Activated B cell treated with CpG ODN at 0.5 μM for 24 hours (primary cell): ENCODE measurements at regions of chr9 and their contacts with region 1.

Region 1: GRCh38 chr9:37371565-37372464 is 50.7 kb upstream of the GRHPR start:
- DNase-seq: peak; percentile 48
- ATAC-seq: peak; percentile 16
- H3K4me3 Mint-ChIP-seq: peak overlapping the region; percentile 57
- H3K27ac Mint-ChIP-seq: peak overlapping the region; percentile 100
- H3K4me1 Mint-ChIP-seq: peaks cover 91% of the 10 kb centered on the region
- H3K27me3 Mint-ChIP-seq: no peaks in the 10 kb centered on the region
- CTCF ChIP-seq: no peak

Region 2: DNA sequence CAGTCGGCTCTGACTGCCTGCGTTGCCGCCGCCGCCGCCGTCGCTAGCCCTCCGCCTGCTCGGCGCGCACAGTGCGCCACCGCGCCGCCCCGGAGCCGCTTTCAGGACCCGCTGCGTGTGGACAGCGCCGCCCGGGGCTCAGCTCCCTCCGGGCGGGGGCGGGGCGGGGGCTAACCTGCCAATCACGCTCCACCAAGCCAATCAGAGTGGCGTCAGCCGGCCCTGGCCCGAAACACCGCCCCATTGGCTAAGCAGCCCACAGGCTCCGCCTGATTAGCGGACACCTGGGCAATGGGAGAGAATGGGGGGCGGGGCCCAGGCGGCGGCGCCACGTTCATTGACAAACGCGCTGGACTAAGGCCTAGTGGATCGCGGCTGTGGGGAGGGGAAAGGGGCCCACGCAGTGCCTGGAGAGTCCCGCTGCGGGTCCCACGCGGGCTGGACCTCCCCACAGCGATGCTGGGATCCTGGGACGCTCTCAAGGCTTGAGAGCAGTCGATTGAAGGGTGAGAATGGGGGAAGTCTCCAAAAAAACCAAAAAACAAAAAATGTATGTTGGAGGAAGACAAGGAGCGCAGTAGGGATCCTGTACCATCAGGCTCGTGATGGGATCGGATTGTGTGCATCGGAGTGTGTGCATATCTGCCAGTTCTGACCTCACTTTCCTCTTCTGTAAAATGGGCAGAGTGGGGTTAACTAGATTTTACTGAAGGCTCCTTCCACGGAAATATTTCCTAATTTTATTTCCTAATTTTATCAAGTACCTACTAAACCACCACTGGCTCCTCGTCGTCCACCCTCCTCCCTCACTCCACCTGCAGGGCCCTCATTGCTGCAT is 344.0 kb before region 1 on chr9:
- CTCF ChIA-PET with region 1: no interaction called
- POLR2A ChIA-PET with region 1: interaction called, 28 read pairs
- intact Hi-C with region 1: no loop called
- DNase-seq: peak; percentile 95
- ATAC-seq: peak; percentile 85
- H3K4me3 Mint-ChIP-seq: peak overlapping the region; percentile 90
- H3K27ac Mint-ChIP-seq: peak overlapping the region; percentile 96
- H3K4me1 Mint-ChIP-seq: peaks cover 77% of the 10 kb centered on the region
- H3K27me3 Mint-ChIP-seq: no peaks in the 10 kb centered on the region
- CTCF ChIP-seq: no peak

Region 3: DNA sequence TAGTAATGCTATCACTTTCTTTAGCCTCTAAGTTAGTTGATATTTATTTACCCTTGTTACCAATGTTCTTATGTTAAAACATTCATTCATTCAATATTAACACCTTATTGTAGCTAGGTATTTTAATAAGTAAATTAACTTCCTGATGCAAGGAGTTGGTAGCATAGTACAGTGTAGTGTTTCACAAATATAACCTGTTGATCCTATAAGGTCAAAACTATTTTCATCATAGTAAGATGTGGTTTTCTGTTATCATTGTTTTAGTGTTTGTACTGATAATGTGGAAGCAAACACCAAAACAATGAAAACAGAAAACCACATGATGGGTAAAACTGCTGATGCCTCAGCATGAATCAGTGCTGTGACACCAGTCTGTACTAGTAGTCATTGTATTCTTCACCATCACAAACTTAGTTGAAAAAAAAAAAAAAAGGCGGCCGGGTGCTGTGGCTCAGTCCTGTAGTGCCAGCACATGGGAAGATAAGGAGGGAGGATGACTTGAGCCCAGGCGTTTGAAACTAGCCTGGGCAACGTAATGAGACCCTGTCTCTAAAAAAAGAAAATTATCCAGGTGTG is 214.9 kb before region 1 on chr9:
- CTCF ChIA-PET with region 1: no interaction called
- POLR2A ChIA-PET with region 1: no interaction called
- intact Hi-C with region 1: no loop called
- DNase-seq: no peak
- ATAC-seq: no peak
- H3K4me3 Mint-ChIP-seq: no peak overlapping the region
- H3K27ac Mint-ChIP-seq: peak overlapping the region; percentile 41
- H3K4me1 Mint-ChIP-seq: peaks cover 44% of the 10 kb centered on the region
- H3K27me3 Mint-ChIP-seq: no peaks in the 10 kb centered on the region
- CTCF ChIP-seq: no peak

Region 4: DNA sequence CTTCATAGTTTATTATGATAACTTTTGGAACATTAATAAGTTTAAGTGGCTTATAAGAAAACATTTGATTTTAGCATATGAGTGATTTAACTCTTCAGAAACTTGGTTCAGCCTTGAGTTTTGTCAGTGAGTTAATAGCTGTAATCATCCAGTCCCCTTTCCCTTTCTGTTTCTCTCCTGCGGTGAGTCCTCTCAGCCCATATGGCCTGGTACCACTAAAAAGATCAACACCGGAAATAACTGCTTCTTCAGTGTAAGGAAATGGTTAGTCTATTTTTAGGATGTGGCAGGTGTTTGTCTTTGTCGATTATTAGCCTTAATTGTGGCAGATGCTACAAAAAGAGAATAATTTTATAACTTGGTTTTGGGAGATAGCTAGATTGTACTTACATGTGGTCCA is 69.5 kb before region 1 on chr9:
- CTCF ChIA-PET with region 1: no interaction called
- POLR2A ChIA-PET with region 1: interaction called, 11 read pairs
- intact Hi-C with region 1: no loop called
- DNase-seq: no peak
- ATAC-seq: peak; percentile 84
- H3K4me3 Mint-ChIP-seq: peak overlapping the region; percentile 73
- H3K27ac Mint-ChIP-seq: peak overlapping the region; percentile 96
- H3K4me1 Mint-ChIP-seq: peaks cover 83% of the 10 kb centered on the region
- H3K27me3 Mint-ChIP-seq: no peaks in the 10 kb centered on the region
- CTCF ChIP-seq: no peak

Region 5: GRCh38 chr9:37337301-37337890 is 34.4 kb before region 1 on chr9:
- CTCF ChIA-PET with region 1: interaction called, 3 read pairs
- POLR2A ChIA-PET with region 1: interaction called, 119 read pairs
- intact Hi-C with region 1: loop called (anchors 1 kb)
- DNase-seq: no peak
- ATAC-seq: peak; percentile 50
- H3K4me3 Mint-ChIP-seq: peak overlapping the region; percentile 71
- H3K27ac Mint-ChIP-seq: peak overlapping the region; percentile 94
- H3K4me1 Mint-ChIP-seq: peaks cover 73% of the 10 kb centered on the region
- H3K27me3 Mint-ChIP-seq: no peaks in the 10 kb centered on the region
- CTCF ChIP-seq: no peak

Region 6: DNA sequence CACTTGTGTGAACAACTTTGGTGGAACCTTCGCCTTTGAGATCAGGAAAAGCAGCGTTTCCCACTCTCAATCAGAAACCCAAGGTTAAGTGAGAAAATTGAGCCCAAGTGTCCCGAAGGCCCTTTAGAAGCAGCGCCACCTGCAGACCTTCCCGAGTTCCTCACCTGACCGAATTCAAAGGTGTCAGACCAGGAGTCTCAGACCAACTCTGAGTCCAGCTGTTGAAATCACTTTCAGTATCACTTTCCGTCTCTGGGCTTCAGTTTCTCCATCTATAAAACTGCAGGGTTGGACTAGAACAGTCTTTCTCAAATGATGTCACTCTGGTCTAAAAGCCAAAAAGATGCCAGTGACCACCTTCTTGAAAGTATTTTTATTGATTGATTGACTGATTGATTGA is 18.9 kb after region 1 on chr9:
- CTCF ChIA-PET with region 1: interaction called, 6 read pairs
- POLR2A ChIA-PET with region 1: interaction called, 430 read pairs
- intact Hi-C with region 1: loop called (anchors 1 kb)
- DNase-seq: no peak
- ATAC-seq: peak; percentile 54
- H3K4me3 Mint-ChIP-seq: peak overlapping the region; percentile 4
- H3K27ac Mint-ChIP-seq: peak overlapping the region; percentile 86
- H3K4me1 Mint-ChIP-seq: peaks cover 66% of the 10 kb centered on the region
- H3K27me3 Mint-ChIP-seq: no peaks in the 10 kb centered on the region
- CTCF ChIP-seq: no peak

Region 7: DNA sequence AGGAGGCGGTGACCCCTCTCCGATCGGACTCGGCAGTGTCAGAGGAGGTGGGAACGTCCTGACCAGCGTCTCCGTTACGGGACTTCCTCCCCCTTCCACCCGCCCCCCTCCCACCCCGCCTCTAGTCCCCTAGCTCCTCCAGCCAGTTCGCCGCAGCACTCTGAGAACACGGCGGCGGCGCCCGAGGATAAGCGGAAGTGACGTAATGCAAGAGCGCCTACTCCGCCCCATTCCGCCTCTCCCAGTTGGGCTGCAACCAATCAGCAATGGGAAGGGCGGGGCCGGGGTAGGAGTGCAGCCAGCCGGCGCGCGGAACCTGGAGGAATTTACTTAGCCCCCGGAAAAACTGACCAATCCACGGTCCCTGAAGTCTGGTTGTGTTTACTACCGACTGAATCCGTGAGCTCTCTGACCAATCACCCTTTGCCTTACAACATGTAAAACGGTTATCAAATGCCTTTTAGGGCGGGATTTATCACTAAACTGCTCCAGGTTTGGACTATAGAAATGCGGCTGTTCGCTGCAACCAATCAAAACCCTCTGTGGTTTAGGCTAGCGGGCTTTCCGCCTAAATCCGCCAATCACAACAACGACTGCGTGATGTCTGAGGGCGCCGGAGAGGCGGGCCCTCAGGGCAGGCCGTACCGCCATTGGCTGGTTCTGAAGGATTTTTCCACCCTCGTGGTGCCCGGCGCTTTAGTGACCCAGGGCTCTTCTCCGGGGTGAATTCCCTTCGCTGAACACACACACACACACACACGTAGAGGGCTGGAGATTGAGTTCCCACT is 93.6 kb after region 1 on chr9 and contains the start of gene ZBTB5:
- CTCF ChIA-PET with region 1: no interaction called
- POLR2A ChIA-PET with region 1: interaction called, 19 read pairs
- intact Hi-C with region 1: no loop called
- DNase-seq: peak; percentile 93
- ATAC-seq: peak; percentile 76
- H3K4me3 Mint-ChIP-seq: peak within 1 kb of the TSS; percentile 98
- H3K27ac Mint-ChIP-seq: peak within 1 kb of the TSS; percentile 98
- H3K4me1 Mint-ChIP-seq: peaks cover 36% of the 10 kb centered on the region
- H3K27me3 Mint-ChIP-seq: no peaks in the 10 kb centered on the region
- CTCF ChIP-seq: no peak
- total RNA-seq, gene ZBTB5: 26.5 and 28.1 TPM in 2 replicates

Region 8: DNA sequence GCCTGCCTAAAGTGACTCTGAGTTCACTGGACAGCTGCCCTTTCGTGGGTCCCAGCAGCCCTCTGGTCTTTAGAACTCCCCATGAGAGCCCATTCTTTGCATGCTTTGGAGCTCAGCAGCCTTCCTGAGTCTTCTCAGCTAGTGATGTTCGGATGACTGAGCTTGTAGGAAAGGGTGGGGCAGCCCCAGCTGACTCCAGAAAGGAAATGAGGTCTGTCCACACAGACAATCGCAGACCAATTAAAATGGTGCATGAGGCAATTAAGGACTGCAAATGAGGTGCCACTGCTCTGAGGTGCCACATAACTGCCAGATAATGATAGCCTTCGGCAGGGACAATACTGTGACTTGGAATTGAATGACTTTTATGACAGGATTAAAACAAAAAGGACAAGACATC is 246.0 kb after region 1 on chr9:
- CTCF ChIA-PET with region 1: no interaction called
- POLR2A ChIA-PET with region 1: no interaction called
- intact Hi-C with region 1: no loop called
- DNase-seq: no peak
- ATAC-seq: no peak
- H3K4me3 Mint-ChIP-seq: no peak overlapping the region
- H3K27ac Mint-ChIP-seq: no peak overlapping the region
- H3K4me1 Mint-ChIP-seq: no peaks in the 10 kb centered on the region
- H3K27me3 Mint-ChIP-seq: no peaks in the 10 kb centered on the region
- CTCF ChIP-seq: no peak